ENCODE measurements at regions of chr16 and their contacts with region 1.

Region 1: GRCh38 chr16:30844671-30845449 is 49.0 kb downstream of the BCL7C start:
- DNase-seq: peak; percentile 64 to 67
- ATAC-seq: peak; percentile 91 to 93
- H3K4me3 ChIP-seq: peak overlapping the region; percentile 19 to 44 (median 30)
- H3K27ac ChIP-seq: peak overlapping the region; percentile 21 to 70 (median 40)
- H3K4me1 ChIP-seq: peaks cover 6 to 13% of the 10 kb centered on the region in 2 donors
- H3K27me3 ChIP-seq: no peaks in the 10 kb centered on the region
- CTCF ChIP-seq: peak; percentile 78 to 93 (median 90)
- POLR2A ChIP-seq: no peak

Region 2: GRCh38 chr16:30813821-30814189 is 31.1 kb before region 1 on chr16:
- in situ Hi-C with region 1: no loop called
- intact Hi-C with region 1: no loop called
- DNase-seq: no peak
- ATAC-seq: peak; percentile 29 to 73
- H3K4me3 ChIP-seq: peak overlapping the region; percentile 57 to 67 (median 62)
- H3K27ac ChIP-seq: peak overlapping the region; percentile 70 to 87 (median 78)
- H3K4me1 ChIP-seq: no peaks in the 10 kb centered on the region
- H3K27me3 ChIP-seq: no peaks in the 10 kb centered on the region
- CTCF ChIP-seq: no peak
- POLR2A ChIP-seq: no peak

Region 3: DNA sequence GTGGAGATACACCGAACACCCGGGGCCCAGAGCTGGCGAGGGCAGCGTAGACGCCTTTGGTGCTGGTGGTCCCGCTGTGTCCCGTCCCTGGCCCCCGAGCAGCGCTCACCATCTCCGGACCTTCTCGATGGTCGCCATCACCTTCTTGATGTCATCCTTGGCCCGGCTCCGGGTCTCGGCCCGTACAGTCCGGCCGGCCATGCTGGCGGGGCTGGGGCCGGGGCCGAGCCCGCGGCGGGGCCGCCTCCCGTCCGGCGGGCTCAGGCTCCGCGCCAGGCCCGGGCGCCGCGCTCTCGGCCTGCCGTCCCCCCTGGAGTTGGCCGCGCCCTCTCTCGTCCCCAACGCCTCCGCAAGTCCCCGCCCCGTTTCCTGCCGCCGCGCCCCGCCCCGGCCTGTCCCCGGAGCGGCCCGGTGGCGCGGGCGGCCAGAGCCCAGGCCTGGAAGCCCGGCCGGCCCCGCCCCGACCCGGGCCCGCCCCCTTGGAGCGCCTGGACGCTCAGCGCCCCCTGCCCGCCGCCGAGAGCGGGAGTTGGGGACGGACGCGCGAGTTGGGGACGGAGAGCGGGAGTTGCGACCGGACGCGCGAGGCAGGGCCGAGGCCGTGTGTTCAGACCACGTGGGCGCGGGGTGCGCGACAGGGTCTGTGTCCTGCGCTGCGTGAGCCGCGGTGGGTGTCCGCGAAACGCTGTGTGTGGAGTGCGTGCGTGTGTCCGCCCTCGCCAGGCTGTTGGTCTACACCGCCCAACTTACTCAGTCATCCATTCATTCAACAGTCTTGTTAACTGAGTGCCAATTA is 49.1 kb after region 1 on chr16 and contains the start of gene BCL7C:
- in situ Hi-C with region 1: no loop called
- intact Hi-C with region 1: loop called (anchors 2 kb)
- DNase-seq: peak; percentile 89
- ATAC-seq: peak; percentile 59 to 67
- H3K4me3 ChIP-seq: peak within 1 kb of the TSS; percentile 71 to 81 (median 80)
- H3K27ac ChIP-seq: peak within 1 kb of the TSS; percentile 93 to 100 (median 96)
- H3K4me1 ChIP-seq: peaks cover 34 to 39% of the 10 kb centered on the region in 2 donors
- H3K27me3 ChIP-seq: no peaks in the 10 kb centered on the region
- CTCF ChIP-seq: peak; percentile 31 to 71 (median 45)
- POLR2A ChIP-seq: peak; percentile 35 to 57
- total RNA-seq, gene BCL7C: 16.4 to 24.5 (median 22.3) TPM

Region 4: GRCh38 chr16:30902029-30902972 is 57.4 kb after region 1 on chr16:
- in situ Hi-C with region 1: loop called in 1 of 4 experiments (anchors 5 kb)
- intact Hi-C with region 1: loop called (anchors 1 kb)
- DNase-seq: peak in 1 of 2 donors; percentile 61
- ATAC-seq: peak; percentile 91 to 92
- H3K4me3 ChIP-seq: peak overlapping the region; percentile 61 to 78 (median 70)
- H3K27ac ChIP-seq: peak overlapping the region; percentile 77 to 89 (median 88)
- H3K4me1 ChIP-seq: peaks cover 12 to 15% of the 10 kb centered on the region in 2 donors
- H3K27me3 ChIP-seq: no peaks in the 10 kb centered on the region
- CTCF ChIP-seq: peak in 4 of 5 experiments; percentile 55 to 86 (median 62)
- POLR2A ChIP-seq: peak in 1 of 2 donors; percentile 8

Region 5: GRCh38 chr16:30914830-30915229 is 70.0 kb after region 1 on chr16:
- in situ Hi-C with region 1: loop called in 3 of 4 experiments (anchors 5 kb)
- intact Hi-C with region 1: no loop called
- DNase-seq: no peak
- ATAC-seq: no peak
- H3K4me3 ChIP-seq: no peak overlapping the region
- H3K27ac ChIP-seq: no peak overlapping the region
- H3K4me1 ChIP-seq: no peaks in the 10 kb centered on the region
- H3K27me3 ChIP-seq: no peaks in the 10 kb centered on the region
- CTCF ChIP-seq: no peak
- POLR2A ChIP-seq: no peak

Region 6: DNA sequence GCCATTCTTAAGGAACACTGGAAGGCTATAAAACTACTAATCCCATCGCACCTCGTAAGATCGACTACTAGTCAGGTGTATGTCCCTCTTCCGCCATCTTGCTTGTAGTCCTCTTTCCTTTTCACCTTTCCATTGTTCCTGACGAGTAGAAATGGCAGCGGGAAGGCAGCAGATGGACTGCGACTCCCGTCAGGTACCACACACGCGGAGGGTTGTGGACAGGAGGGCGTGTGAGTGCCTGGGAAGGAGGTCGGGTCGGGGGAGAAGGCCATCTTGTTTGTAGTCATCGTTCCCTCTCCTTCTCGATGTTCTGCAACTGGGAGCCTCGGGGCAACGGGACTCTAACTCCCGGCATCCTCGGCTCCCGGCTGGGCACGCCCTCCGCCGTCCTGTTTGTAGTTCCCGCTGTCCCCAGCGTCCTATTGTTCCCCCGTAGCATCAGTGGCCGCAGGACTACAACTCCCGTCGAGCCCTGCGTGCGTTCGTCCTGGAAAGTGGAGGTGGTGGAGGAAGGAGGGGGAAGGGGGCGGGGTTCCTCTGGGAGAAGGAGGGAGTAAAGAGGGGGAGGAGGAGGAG is 78.2 kb after region 1 on chr16:
- in situ Hi-C with region 1: loop called in 3 of 4 experiments (anchors 5 kb)
- intact Hi-C with region 1: loop called (anchors 1 kb)
- DNase-seq: peak; percentile 100
- ATAC-seq: peak; percentile 79
- H3K4me3 ChIP-seq: peak overlapping the region; percentile 74 to 93 (median 88)
- H3K27ac ChIP-seq: peak overlapping the region; percentile 92 to 97 (median 96)
- H3K4me1 ChIP-seq: peaks cover 11 to 16% of the 10 kb centered on the region in 2 donors
- H3K27me3 ChIP-seq: no peaks in the 10 kb centered on the region
- CTCF ChIP-seq: no peak
- POLR2A ChIP-seq: peak in 1 of 2 donors; percentile 64

Region 7: GRCh38 chr16:31868691-31869167 is 1023.9 kb after region 1 on chr16:
- in situ Hi-C with region 1: loop called in 2 of 4 experiments (anchors 25 kb)
- intact Hi-C with region 1: loop called (anchors 10 kb)
- DNase-seq: peak; percentile 48 to 66
- ATAC-seq: peak; percentile 69 to 77
- H3K4me3 ChIP-seq: no peak overlapping the region
- H3K27ac ChIP-seq: no peak overlapping the region
- H3K4me1 ChIP-seq: peaks cover 0 to 8% of the 10 kb centered on the region in 2 donors
- H3K27me3 ChIP-seq: no peaks in the 10 kb centered on the region
- CTCF ChIP-seq: peak; percentile 63 to 85 (median 79)
- POLR2A ChIP-seq: no peak

Region 8: GRCh38 chr16:31873556-31874365 is 1028.9 kb after region 1 on chr16 and contains the start of gene ZNF267:
- in situ Hi-C with region 1: loop called in 2 of 4 experiments (anchors 25 kb)
- intact Hi-C with region 1: loop called (anchors 10 kb)
- DNase-seq: peak; percentile 88 to 94
- ATAC-seq: peak; percentile 97 to 98
- H3K4me3 ChIP-seq: peak within 1 kb of the TSS; percentile 77 to 98 (median 88)
- H3K27ac ChIP-seq: peak within 1 kb of the TSS; percentile 76 to 92 (median 84)
- H3K4me1 ChIP-seq: peaks cover 16 to 23% of the 10 kb centered on the region in 2 donors
- H3K27me3 ChIP-seq: no peaks in the 10 kb centered on the region
- CTCF ChIP-seq: no peak
- POLR2A ChIP-seq: peak; percentile 76 to 77
- total RNA-seq, gene ZNF267: 6.5 to 13.3 (median 8.2) TPM

Measured in gastrocnemius medialis (tissue), 4 donors.